ENCODE measurements at regions of chr1 and their contacts with region 1.

Region 1: GRCh38 chr1:150053926-150054325 is 13.7 kb upstream of the VPS45 start:
- DNase-seq: no peak
- ATAC-seq: no peak

Region 2: DNA sequence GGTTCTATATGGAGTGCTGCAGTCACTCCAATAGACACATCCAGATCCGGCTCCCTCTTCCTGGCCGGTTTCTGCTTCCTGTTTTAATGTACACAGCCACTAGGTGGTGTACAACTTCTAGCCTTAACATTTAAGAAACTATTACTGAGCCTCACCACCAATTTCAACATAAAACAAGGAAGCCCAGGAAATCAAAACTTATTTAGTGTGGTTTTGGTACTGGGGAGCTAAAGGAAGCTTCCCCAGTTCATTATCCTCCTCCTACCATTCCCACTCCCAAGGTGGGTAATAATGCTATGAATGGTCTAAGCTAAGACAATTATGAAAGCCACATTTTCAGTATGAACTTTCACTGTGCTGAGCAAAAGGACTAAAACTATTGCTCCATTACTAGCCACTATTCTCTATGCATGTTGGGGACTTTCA is 91.8 kb before region 1 on chr1:
- intact Hi-C with region 1: loop called (anchors 2 kb)
- DNase-seq: no peak
- ATAC-seq: peak; percentile 94

Region 3: GRCh38 chr1:150089846-150090520 is 36.1 kb after region 1 on chr1:
- intact Hi-C with region 1: no loop called
- DNase-seq: no peak
- ATAC-seq: peak; percentile 33